Left colon (tissue), 2 donors: ENCODE measurements at regions of chr1 and their contacts with region 1.

Region 1: DNA sequence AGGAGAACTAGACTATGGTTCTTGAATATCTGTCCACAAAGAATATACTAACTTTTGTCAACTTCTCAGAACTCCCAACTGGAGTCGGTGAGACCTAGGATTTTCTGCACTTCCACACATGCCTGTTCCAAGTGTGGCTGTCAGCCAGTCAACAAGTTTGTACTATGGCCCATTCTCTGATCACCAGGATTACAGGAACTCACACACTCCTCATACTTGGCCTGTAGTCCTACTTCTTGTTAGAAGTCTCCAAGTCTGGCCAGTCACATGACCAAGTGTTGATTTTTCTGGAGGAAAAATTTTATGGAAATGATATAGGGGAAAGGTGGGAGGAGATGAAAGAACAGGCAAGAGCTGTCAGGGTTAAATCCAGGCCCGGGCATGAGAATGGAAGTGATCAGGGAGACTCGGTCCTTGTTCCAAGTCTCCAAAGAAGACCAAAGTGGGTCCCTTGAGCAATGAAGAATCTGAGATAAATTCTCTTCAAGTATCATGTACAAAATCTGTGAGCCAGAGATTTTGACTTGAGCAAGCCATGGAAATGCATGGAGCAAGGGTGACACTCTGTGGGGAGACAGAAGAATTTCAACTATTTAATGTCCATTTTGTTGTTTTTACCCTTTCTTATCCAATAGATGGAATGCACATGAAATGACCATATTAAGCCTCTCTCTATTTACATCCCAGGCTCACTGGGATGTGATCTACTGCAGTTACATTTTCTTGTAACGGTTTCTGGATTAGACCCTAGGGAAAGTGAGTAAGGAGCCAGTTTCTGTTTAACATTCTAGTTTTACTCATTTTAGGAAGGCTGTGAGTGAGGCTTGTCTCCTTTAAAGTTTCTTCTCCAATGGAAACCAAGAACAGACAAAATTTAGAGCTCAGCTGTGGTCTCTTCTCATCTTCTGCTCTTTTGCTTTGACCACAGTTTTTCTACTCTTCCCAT is 320.9 kb downstream of the ASTN1 start:
- DNase-seq: no peak
- ATAC-seq: no peak

Region 2: GRCh38 chr1:176058686-176059085 is 784.9 kb before region 1 on chr1:
- intact Hi-C with region 1: no loop called
- DNase-seq: no peak
- ATAC-seq: no peak

Region 3: GRCh38 chr1:176450523-176450922 is 393.1 kb before region 1 on chr1:
- intact Hi-C with region 1: no loop called
- DNase-seq: no peak
- ATAC-seq: no peak

Region 4: GRCh38 chr1:176691251-176692228 is 152.1 kb before region 1 on chr1:
- intact Hi-C with region 1: loop called in 1 of 2 experiments (anchors 10 kb)
- DNase-seq: peak; percentile 40 to 51
- ATAC-seq: peak; percentile 87

Region 5: GRCh38 chr1:177044390-177044789 is 200.8 kb after region 1 on chr1:
- intact Hi-C with region 1: no loop called
- DNase-seq: no peak
- ATAC-seq: no peak